Activated CD4-positive, alpha-beta memory T cell treated with anti-CD3 and anti-CD28 coated beads, Interleukin-2, amount 10 ng/mL, durations not matched to agents 7 days and 5 days (primary cell): ENCODE measurements at regions of chr6 and their contacts with region 1.

Region 1: DNA sequence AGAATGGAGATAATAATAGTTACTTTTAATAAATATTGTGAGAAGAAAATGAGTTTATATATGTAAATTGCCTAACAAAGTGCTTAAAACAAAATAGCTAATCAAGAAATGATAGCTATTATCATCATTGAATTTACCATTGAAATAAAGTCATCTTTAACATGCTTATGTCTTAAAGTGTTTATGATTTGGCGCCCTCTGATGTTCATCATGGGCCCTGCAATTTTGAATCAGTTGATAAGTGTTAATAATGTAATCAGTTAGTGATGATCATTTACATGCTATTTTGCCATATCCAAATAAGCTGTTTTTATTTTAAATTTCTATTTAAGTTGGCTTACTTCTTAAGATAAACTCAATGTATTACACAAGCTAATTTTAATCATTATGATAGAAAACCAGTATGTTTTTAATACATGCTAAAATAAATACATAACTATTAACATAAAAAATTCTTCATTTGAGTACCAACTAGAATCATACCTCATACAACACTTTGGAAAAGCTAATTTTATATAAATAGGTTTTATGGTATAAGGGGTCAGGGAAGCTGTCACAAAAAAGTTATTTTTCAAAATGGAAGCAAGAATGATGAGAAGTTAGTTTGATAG is 39.2 kb upstream of the TPD52L1 start:
- DNase-seq: peak; percentile 53
- H3K4me3 Mint-ChIP-seq: no peak overlapping the region
- H3K27ac Mint-ChIP-seq: no peak overlapping the region
- H3K4me1 Mint-ChIP-seq: no peaks in the 10 kb centered on the region
- H3K27me3 Mint-ChIP-seq: peaks cover 3% of the 10 kb centered on the region

Region 2: GRCh38 chr6:124870611-124871459 is 243.5 kb before region 1 on chr6:
- CTCF ChIA-PET with region 1: interaction called, 12 read pairs
- POLR2A ChIA-PET with region 1: no interaction called
- DNase-seq: no peak
- H3K4me3 Mint-ChIP-seq: no peak overlapping the region
- H3K27ac Mint-ChIP-seq: no peak overlapping the region
- H3K4me1 Mint-ChIP-seq: no peaks in the 10 kb centered on the region
- H3K27me3 Mint-ChIP-seq: no peaks in the 10 kb centered on the region